Prostate gland (tissue), 2 donors: ENCODE measurements at regions of chrX and their contacts with region 1.

Region 1: GRCh38 chrX:15564981-15565579 is 35.7 kb downstream of the ACE2 start:
- DNase-seq: peak; percentile 67
- H3K4me3 ChIP-seq: no peak overlapping the region
- H3K27ac ChIP-seq: no peak overlapping the region
- H3K4me1 ChIP-seq: no peaks in the 10 kb centered on the region
- H3K27me3 ChIP-seq: no peaks in the 10 kb centered on the region
- CTCF ChIP-seq: peak in 3 of 4 experiments; percentile 40 to 73 (median 66)
- POLR2A ChIP-seq: no peak

Region 2: DNA sequence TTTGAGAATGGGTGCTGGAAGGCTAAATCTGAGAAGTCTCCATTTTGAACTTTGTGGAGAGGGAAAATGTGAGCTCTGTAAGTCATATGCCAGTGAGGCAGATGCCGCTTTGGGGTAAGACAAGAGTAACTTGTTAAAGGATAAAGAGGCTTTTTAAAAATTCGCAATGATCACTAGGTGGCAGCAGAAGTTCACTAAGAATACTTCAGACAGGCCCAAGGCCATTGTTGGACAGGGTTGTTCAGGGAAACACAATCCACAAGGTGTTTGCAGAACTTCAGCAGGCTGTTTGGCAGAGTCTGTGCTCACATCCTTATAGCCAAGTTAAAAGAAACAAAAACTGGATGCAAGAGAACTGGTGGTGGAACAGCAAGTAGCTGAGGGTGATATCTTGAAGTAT is 216.0 kb before region 1 on chrX:
- intact Hi-C with region 1: loop called (anchors 10 kb)
- DNase-seq: peak; percentile 63
- H3K4me3 ChIP-seq: no peak overlapping the region
- H3K27ac ChIP-seq: no peak overlapping the region
- H3K4me1 ChIP-seq: no peaks in the 10 kb centered on the region
- H3K27me3 ChIP-seq: no peaks in the 10 kb centered on the region
- CTCF ChIP-seq: peak in 3 of 4 experiments; percentile 34 to 67 (median 48)
- POLR2A ChIP-seq: no peak

Region 3: GRCh38 chrX:15471016-15471415 is 94.1 kb before region 1 on chrX:
- intact Hi-C with region 1: loop called (anchors 10 kb)
- DNase-seq: peak; percentile 44
- H3K4me3 ChIP-seq: no peak overlapping the region
- H3K27ac ChIP-seq: no peak overlapping the region
- H3K4me1 ChIP-seq: no peaks in the 10 kb centered on the region
- H3K27me3 ChIP-seq: no peaks in the 10 kb centered on the region
- CTCF ChIP-seq: peak in 3 of 4 experiments; percentile 29 to 67 (median 53)
- POLR2A ChIP-seq: no peak